ENCODE measurements at regions of chr19 and their contacts with region 1.

Region 1: GRCh38 chr19:44025217-44025936 is at the start of gene ZNF222:
- DNase-seq: peak; percentile 34 to 89 (median 75)
- ATAC-seq: peak; percentile 97
- H3K4me3 ChIP-seq: peak within 1 kb of the TSS; percentile 84 to 92
- H3K4me3 Mint-ChIP-seq: peak within 1 kb of the TSS; percentile 95
- H3K27ac ChIP-seq: peak within 1 kb of the TSS; percentile 47 to 61
- H3K27ac Mint-ChIP-seq: peak within 1 kb of the TSS; percentile 91
- H3K4me1 ChIP-seq: peaks cover 12% of the 10 kb centered on the region
- H3K4me1 Mint-ChIP-seq: peaks cover 30% of the 10 kb centered on the region
- H3K27me3 ChIP-seq: no peaks in the 10 kb centered on the region
- H3K27me3 Mint-ChIP-seq: peaks cover 1% of the 10 kb centered on the region
- CTCF ChIP-seq: no peak
- total RNA-seq, gene ZNF222: 7.7 TPM

Region 2: GRCh38 chr19:43966079-43966694 is 59.2 kb before region 1 on chr19:
- CTCF ChIA-PET with region 1: no interaction called
- POLR2A ChIA-PET with region 1: no interaction called
- intact Hi-C with region 1: no loop called
- DNase-seq: no peak
- ATAC-seq: no peak
- H3K4me3 ChIP-seq: no peak overlapping the region
- H3K4me3 Mint-ChIP-seq: no peak overlapping the region
- H3K27ac ChIP-seq: no peak overlapping the region
- H3K27ac Mint-ChIP-seq: no peak overlapping the region
- H3K4me1 ChIP-seq: no peaks in the 10 kb centered on the region
- H3K4me1 Mint-ChIP-seq: no peaks in the 10 kb centered on the region
- H3K27me3 ChIP-seq: no peaks in the 10 kb centered on the region
- H3K27me3 Mint-ChIP-seq: no peaks in the 10 kb centered on the region
- CTCF ChIP-seq: no peak

Region 3: DNA sequence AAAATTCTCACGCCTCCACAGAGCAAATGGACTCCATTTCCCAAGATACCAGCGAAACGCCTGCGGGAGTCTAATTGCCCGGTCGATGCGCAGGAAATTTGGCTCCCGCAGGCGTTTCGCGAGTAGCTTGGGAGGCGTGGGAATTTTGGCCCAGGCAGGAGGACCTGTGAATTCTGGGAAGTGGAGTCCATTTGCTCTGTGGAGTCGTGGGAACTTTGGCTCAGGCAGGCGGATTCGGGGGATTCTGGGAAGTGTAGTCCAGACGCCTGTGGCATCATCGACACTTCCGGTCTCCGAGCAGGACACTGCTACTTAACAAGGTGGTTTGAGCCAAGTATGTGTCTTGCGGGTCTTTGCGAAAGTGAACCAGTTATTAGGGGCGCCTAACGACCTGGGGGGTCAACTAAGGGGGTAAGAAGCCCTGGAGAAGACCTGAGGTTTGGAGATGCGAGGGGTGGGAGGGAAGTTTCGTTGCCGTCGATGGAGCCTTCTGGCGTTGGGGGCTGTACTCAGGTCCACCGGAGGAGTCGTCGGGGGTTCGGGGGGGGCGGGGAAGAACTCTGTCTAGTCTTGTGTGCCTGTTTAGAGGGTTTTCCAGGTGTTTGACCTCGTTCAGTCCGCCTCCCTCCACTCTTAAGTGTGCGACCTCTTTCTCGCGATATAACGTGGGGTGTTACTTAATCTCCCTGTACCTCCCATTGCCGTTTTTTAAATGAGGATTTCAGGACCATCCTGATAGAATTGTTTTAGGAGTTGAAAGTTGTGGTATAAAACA is 41.3 kb before region 1 on chr19 and contains the start of gene ZNF155:
- CTCF ChIA-PET with region 1: no interaction called
- POLR2A ChIA-PET with region 1: no interaction called
- intact Hi-C with region 1: loop called in 1 of 2 experiments (anchors 1 kb)
- DNase-seq: peak; percentile 28 to 89 (median 64)
- ATAC-seq: peak; percentile 86
- H3K4me3 ChIP-seq: peak within 1 kb of the TSS; percentile 76 to 92
- H3K4me3 Mint-ChIP-seq: peak within 1 kb of the TSS; percentile 96
- H3K27ac ChIP-seq: peak within 1 kb of the TSS; percentile 61 to 65
- H3K27ac Mint-ChIP-seq: peak within 1 kb of the TSS; percentile 92
- H3K4me1 ChIP-seq: no peaks in the 10 kb centered on the region
- H3K4me1 Mint-ChIP-seq: peaks cover 15% of the 10 kb centered on the region
- H3K27me3 ChIP-seq: no peaks in the 10 kb centered on the region
- H3K27me3 Mint-ChIP-seq: no peaks in the 10 kb centered on the region
- CTCF ChIP-seq: no peak
- total RNA-seq, gene ZNF155: 3.4 to 3.5 TPM

Region 4: GRCh38 chr19:44051654-44052402 is 26.5 kb after region 1 on chr19 and contains the start of gene ZNF223:
- CTCF ChIA-PET with region 1: no interaction called
- POLR2A ChIA-PET with region 1: no interaction called
- intact Hi-C with region 1: loop called in 1 of 2 experiments (anchors 1 kb)
- DNase-seq: peak; percentile 9 to 85 (median 68)
- ATAC-seq: peak; percentile 84
- H3K4me3 ChIP-seq: peak within 1 kb of the TSS; percentile 71 to 77
- H3K4me3 Mint-ChIP-seq: peak within 1 kb of the TSS; percentile 93
- H3K27ac ChIP-seq: peak within 1 kb of the TSS in 1 of 2 experiments; percentile 40
- H3K27ac Mint-ChIP-seq: peak within 1 kb of the TSS; percentile 85
- H3K4me1 ChIP-seq: peaks cover 11% of the 10 kb centered on the region
- H3K4me1 Mint-ChIP-seq: peaks cover 38% of the 10 kb centered on the region
- H3K27me3 ChIP-seq: no peaks in the 10 kb centered on the region
- H3K27me3 Mint-ChIP-seq: no peaks in the 10 kb centered on the region
- CTCF ChIP-seq: no peak
- total RNA-seq, gene ZNF223: 0.72 to 1.3 TPM

Region 5: DNA sequence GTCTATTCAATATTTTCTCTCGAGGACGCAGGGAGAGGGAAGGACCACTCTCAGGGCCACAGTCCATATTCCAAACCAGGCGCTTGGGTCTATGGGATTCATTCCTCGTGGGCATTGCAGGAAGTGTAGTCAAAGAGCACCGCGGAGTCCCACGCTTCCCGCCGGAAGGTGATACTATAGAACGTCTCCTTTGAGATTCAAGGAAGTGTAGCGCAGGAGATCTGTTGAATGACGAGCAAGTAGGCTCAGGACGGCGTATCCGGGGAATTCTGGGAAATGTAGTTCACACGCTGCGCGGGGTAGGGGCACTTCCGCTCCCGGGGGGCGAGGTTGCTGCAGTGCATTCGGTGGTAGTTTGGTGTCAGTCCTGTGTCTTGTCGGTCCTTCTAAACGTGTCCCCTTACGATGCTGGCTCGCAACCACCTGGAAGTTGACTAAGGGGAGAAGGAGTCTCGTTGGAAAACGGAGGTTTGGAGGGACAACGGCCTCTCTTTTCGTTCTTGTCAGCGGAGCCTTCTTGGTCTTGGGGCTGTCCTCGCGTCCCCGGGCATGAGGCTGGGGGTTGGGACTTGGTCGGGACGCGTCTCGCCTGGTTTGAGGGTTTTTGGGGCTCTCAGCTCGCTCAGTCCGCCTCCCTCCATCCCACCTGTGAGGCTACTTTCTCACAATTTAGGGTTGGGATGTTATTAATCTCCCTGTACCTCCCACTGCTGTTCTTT is 46.6 kb after region 1 on chr19 and contains the start of gene ZNF284:
- CTCF ChIA-PET with region 1: no interaction called
- POLR2A ChIA-PET with region 1: no interaction called
- intact Hi-C with region 1: loop called (anchors 1 kb)
- DNase-seq: peak; percentile 60 to 93 (median 83)
- ATAC-seq: peak; percentile 99
- H3K4me3 ChIP-seq: peak within 1 kb of the TSS; percentile 65 to 73
- H3K4me3 Mint-ChIP-seq: peak within 1 kb of the TSS; percentile 91
- H3K27ac ChIP-seq: peak within 1 kb of the TSS; percentile 2 to 59
- H3K27ac Mint-ChIP-seq: peak within 1 kb of the TSS; percentile 79
- H3K4me1 ChIP-seq: peaks cover 16% of the 10 kb centered on the region
- H3K4me1 Mint-ChIP-seq: peaks cover 36% of the 10 kb centered on the region
- H3K27me3 ChIP-seq: no peaks in the 10 kb centered on the region
- H3K27me3 Mint-ChIP-seq: no peaks in the 10 kb centered on the region
- CTCF ChIP-seq: no peak
- total RNA-seq, gene ZNF284: 0.64 to 1.2 TPM

Region 6: DNA sequence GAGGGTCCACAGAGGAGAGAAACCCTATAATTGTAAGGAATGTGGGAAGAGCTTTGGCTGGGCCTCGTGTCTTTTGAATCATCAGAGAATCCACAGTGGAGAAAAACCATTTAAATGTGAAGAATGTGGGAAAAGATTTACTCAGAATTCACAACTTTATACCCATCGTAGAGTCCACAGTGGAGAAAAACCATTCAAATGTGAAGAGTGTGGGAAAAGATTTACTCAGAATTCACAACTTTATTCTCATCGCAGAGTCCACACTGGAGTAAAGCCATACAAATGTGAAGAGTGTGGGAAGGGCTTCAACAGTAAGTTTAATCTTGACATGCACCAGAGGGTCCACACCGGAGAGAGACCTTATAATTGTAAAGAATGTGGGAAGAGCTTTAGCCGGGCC is 106.6 kb after region 1 on chr19:
- CTCF ChIA-PET with region 1: no interaction called
- POLR2A ChIA-PET with region 1: no interaction called
- intact Hi-C with region 1: no loop called
- DNase-seq: no peak
- ATAC-seq: no peak
- H3K4me3 ChIP-seq: no peak overlapping the region
- H3K4me3 Mint-ChIP-seq: no peak overlapping the region
- H3K27ac ChIP-seq: no peak overlapping the region
- H3K27ac Mint-ChIP-seq: no peak overlapping the region
- H3K4me1 ChIP-seq: no peaks in the 10 kb centered on the region
- H3K4me1 Mint-ChIP-seq: no peaks in the 10 kb centered on the region
- H3K27me3 ChIP-seq: no peaks in the 10 kb centered on the region
- H3K27me3 Mint-ChIP-seq: no peaks in the 10 kb centered on the region
- CTCF ChIP-seq: no peak